Endothelial cell of umbilical vein (primary cell): ENCODE measurements at regions of chr1 and their contacts with region 1.

Region 1: GRCh38 chr1:201511941-201512539 is 5.1 kb upstream of the CSRP1 start:
- DNase-seq: peak; percentile 39
- H3K4me3 ChIP-seq: no peak overlapping the region
- H3K27ac ChIP-seq: peak overlapping the region; percentile 15
- H3K4me1 ChIP-seq: peaks cover 20% of the 10 kb centered on the region
- H3K27me3 ChIP-seq: no peaks in the 10 kb centered on the region
- CTCF ChIP-seq: no peak
- POLR2A ChIP-seq: no peak

Region 2: DNA sequence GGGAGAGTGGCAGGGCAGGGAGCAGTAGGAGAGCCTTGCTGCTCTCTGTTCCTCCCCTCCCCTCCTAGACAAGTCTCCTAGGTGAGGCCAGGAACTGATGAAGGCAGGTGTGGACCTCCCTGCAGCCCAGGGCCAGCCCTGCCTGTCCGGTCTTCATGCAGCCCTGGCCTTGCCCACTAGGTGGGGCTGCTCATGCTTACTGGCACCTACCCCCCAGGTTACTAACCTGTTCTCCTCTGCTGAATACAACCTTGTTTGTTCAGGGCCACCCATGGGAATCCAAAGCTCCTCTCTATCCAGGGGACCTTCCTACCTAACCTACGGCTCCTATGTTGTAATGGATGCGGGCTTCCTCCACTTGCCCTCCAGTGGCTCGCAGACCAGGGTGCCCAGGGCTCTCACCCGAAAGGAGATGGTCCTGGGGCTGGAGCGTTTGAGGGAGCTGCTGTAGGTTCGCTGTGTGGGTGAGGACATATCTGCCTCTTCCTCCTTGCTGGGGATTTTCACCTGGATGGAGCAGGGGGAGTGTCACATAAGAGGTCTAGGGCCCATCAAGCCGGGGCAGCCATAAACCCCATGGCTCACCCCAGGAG is 126.6 kb before region 1 on chr1:
- CTCF ChIA-PET with region 1: interaction called, 8 read pairs
- POLR2A ChIA-PET with region 1: no interaction called
- dilution Hi-C with region 1: no loop called
- intact Hi-C with region 1: loop called (anchors 1 kb)
- DNase-seq: peak; percentile 23
- H3K4me3 ChIP-seq: no peak overlapping the region
- H3K27ac ChIP-seq: no peak overlapping the region
- H3K4me1 ChIP-seq: no peaks in the 10 kb centered on the region
- H3K27me3 ChIP-seq: peaks cover 0 to 5% of the 10 kb centered on the region in 2 experiments
- CTCF ChIP-seq: peak; percentile 83 to 92
- POLR2A ChIP-seq: no peak

Region 3: GRCh38 chr1:201447911-201448871 is 63.8 kb before region 1 on chr1:
- CTCF ChIA-PET with region 1: interaction called, 148 read pairs
- POLR2A ChIA-PET with region 1: no interaction called
- dilution Hi-C with region 1: no loop called
- intact Hi-C with region 1: loop called (anchors 1 kb)
- DNase-seq: peak; percentile 57
- H3K4me3 ChIP-seq: no peak overlapping the region
- H3K27ac ChIP-seq: no peak overlapping the region
- H3K4me1 ChIP-seq: no peaks in the 10 kb centered on the region
- H3K27me3 ChIP-seq: peaks cover 0 to 2% of the 10 kb centered on the region in 2 experiments
- CTCF ChIP-seq: peak; percentile 72 to 80
- POLR2A ChIP-seq: no peak

Region 4: DNA sequence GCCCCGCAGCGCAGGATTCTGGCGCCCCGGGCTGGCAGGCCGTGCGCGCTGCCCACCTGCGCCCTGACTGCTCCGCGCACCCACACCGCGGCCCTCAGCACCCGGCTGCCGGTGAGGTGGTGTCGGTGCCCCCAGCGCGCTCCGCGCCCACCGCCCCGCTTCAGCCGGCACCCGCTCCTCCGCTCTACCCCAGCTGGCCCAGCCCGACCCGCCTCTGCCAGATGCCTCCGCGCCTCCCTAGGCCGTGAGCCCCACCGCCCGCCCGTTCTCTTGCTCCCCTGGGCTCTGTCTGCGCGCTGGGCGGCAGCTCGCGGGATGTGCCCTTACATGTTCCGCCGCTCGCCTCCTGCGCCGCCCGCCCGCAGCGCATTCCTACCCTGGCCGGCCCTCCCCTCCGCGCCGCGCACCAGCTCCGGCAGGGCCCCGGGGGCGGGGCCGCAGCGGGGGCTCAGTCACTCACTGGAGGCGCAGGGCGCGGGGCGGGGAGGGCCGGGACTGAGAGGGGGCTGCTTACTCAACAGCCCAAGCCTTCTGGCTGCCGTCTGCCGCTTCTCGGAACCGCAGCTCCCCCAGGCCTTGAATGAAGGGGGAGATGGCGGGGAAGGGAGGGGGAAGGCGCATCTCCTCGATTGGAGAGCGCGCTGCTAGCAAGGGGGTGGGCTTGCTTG is 43.1 kb before region 1 on chr1 and contains the start of gene PHLDA3:
- CTCF ChIA-PET with region 1: interaction called, 38 read pairs
- POLR2A ChIA-PET with region 1: interaction called, 5 read pairs
- dilution Hi-C with region 1: no loop called
- intact Hi-C with region 1: no loop called
- DNase-seq: peak; percentile 86
- H3K4me3 ChIP-seq: peak within 1 kb of the TSS; percentile 13 to 85 (median 53)
- H3K27ac ChIP-seq: peak within 1 kb of the TSS; percentile 13
- H3K4me1 ChIP-seq: peaks cover 5% of the 10 kb centered on the region
- H3K27me3 ChIP-seq: peaks cover 3% of the 10 kb centered on the region in 2 experiments
- CTCF ChIP-seq: no peak
- POLR2A ChIP-seq: peak; percentile 83
- total RNA-seq, gene PHLDA3: 29.5 and 35.6 TPM in 2 replicates

Region 5: DNA sequence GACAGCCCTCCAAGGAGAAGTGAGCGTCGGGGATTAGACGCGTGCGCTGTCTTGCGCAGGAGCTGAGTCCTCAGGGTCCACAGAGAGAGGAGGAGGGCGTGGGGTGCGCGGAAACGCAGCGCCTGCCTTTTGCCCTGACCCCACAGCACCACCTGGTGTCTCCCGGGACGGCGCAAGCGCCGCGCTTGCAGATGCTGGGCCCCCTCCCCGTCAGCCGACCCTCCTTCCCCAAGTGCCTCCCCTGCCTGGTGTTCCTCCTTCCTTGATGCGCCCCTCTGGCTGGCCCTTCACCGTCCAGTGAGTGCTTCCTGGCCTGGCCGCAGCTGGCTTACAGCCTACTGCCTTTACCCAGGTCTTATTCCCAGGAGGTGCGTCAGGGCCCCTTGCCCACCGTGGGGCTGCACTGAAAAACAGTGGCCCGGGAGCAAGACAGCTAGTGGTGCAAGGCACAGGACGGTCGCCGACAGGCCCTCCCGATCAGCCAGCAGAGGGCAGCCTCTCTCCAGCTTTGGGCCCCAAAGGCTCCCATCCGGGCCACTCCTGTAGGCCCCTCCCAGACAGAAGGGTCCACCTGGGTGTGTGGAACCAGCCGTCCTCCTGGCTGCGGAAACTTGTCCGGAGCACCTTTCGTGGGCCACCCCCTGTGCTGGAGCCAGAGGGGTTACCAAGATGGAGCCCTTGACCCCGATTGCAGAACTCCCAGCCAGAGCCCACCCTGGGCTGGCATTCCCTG is 30.1 kb before region 1 on chr1:
- CTCF ChIA-PET with region 1: interaction called, 1,317 read pairs
- POLR2A ChIA-PET with region 1: interaction called, 124 read pairs
- dilution Hi-C with region 1: loop called (anchors 5 kb)
- intact Hi-C with region 1: loop called (anchors 1 kb)
- DNase-seq: peak; percentile 80
- H3K4me3 ChIP-seq: no peak overlapping the region
- H3K27ac ChIP-seq: no peak overlapping the region
- H3K4me1 ChIP-seq: peaks cover 25% of the 10 kb centered on the region
- H3K27me3 ChIP-seq: peaks cover 0 to 3% of the 10 kb centered on the region in 2 experiments
- CTCF ChIP-seq: peak; percentile 91 to 92
- POLR2A ChIP-seq: no peak

Region 6: GRCh38 chr1:201525197-201525778 is 13.2 kb after region 1 on chr1:
- CTCF ChIA-PET with region 1: interaction called, 31 read pairs
- POLR2A ChIA-PET with region 1: no interaction called
- dilution Hi-C with region 1: no loop called
- intact Hi-C with region 1: no loop called
- DNase-seq: no peak
- H3K4me3 ChIP-seq: no peak overlapping the region
- H3K27ac ChIP-seq: no peak overlapping the region
- H3K4me1 ChIP-seq: no peaks in the 10 kb centered on the region
- H3K27me3 ChIP-seq: no peaks in the 10 kb centered on the region
- CTCF ChIP-seq: no peak
- POLR2A ChIP-seq: no peak

Region 7: GRCh38 chr1:201538612-201539551 is 26.8 kb after region 1 on chr1 and contains the start of gene NAV1:
- CTCF ChIA-PET with region 1: interaction called, 11 read pairs
- POLR2A ChIA-PET with region 1: no interaction called
- dilution Hi-C with region 1: no loop called
- intact Hi-C with region 1: no loop called
- DNase-seq: peak; percentile 84
- H3K4me3 ChIP-seq: peak within 1 kb of the TSS; percentile 70 to 90 (median 85)
- H3K27ac ChIP-seq: peak within 1 kb of the TSS; percentile 93
- H3K4me1 ChIP-seq: peaks cover 74% of the 10 kb centered on the region
- H3K27me3 ChIP-seq: no peaks in the 10 kb centered on the region
- CTCF ChIP-seq: no peak
- POLR2A ChIP-seq: peak; percentile 85
- total RNA-seq, gene NAV1: 136 and 138 TPM in 2 replicates

Region 8: GRCh38 chr1:201742476-201742875 is 230.4 kb after region 1 on chr1:
- CTCF ChIA-PET with region 1: no interaction called
- POLR2A ChIA-PET with region 1: no interaction called
- dilution Hi-C with region 1: no loop called
- intact Hi-C with region 1: no loop called
- DNase-seq: no peak
- H3K4me3 ChIP-seq: no peak overlapping the region
- H3K27ac ChIP-seq: no peak overlapping the region
- H3K4me1 ChIP-seq: peaks cover 30% of the 10 kb centered on the region
- H3K27me3 ChIP-seq: no peaks in the 10 kb centered on the region
- CTCF ChIP-seq: no peak
- POLR2A ChIP-seq: no peak